Naive thymus-derived CD4-positive, alpha-beta T cell (primary cell): ENCODE measurements at regions of chr1 and their contacts with region 1.

Region 1: GRCh38 chr1:153727463-153728304 is at the start of gene INTS3:
- DNase-seq: peak; percentile 84 to 100 (median 99)
- ATAC-seq: peak; percentile 99
- H3K4me3 ChIP-seq: peak within 1 kb of the TSS; percentile 92
- H3K4me3 Mint-ChIP-seq: peak within 1 kb of the TSS; percentile 82 to 97 (median 92)
- H3K27ac ChIP-seq: peak within 1 kb of the TSS; percentile 94
- H3K27ac Mint-ChIP-seq: peak within 1 kb of the TSS; percentile 89 to 98 (median 95)
- H3K4me1 ChIP-seq: peaks cover 11 to 15% of the 10 kb centered on the region in 2 donors
- H3K4me1 Mint-ChIP-seq: peaks cover 7 to 35% (median 32%) of the 10 kb centered on the region in 7 donors
- H3K27me3 ChIP-seq: no peaks in the 10 kb centered on the region
- H3K27me3 Mint-ChIP-seq: peaks cover 0 to 2% (median 0%) of the 10 kb centered on the region in 5 donors
- total RNA-seq, gene INTS3: 43.6 to 68.1 (median 56.8) TPM

Region 2: DNA sequence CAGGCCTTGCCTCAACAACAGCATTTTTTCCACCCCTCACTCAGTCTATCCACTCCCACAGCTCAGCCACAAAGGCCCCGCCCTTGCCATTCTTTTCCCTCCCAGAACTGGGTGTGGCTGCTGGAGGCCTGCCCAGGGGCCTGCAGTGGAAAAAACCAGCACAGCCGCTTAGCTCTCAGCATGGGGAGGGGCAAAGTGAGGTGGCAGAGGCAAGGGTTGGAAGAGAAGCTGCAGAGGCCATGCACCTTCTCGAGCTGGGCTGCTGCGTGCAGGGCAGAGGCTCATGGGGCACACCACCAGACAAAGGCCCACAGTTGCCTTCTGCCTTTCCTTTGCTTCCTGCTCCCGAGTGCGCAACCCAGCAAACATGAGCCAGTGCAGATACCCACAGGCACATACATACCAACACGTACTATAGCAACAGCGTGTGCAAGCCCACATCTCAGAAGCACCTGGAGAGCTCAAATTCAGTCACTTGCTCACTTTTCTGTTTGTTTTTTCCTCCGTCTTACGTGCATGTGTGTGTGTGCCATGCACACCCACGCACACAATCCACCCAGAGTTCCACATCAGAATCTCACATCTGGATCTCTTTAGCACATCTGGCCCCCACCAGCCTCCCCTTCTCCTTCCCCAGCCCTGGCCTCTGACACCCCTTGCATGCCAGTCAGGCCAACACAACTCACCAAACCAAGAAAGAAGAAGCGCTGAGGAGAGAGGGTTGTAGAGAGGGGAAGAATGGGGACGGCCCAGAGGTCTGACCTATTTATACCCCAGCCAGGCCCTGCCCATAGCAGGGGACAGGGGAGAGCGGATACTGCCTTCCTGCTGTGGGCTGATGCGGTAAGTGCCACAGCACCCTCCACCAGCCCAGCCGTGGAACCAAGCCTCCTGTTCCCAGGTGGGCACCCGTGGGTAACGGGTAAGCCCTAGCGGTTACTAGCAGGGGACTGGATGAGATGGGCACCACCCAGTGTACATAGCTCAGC is 182.3 kb before region 1 on chr1 and contains the start of gene S100A4:
- CTCF ChIA-PET with region 1: no interaction called
- POLR2A ChIA-PET with region 1: interaction called, 4 read pairs
- intact Hi-C with region 1: loop called in 1 of 2 experiments (anchors 5 kb)
- DNase-seq: peak; percentile 50 to 93 (median 89)
- ATAC-seq: peak; percentile 84
- H3K4me3 ChIP-seq: peak within 1 kb of the TSS; percentile 69
- H3K4me3 Mint-ChIP-seq: peak within 1 kb of the TSS; percentile 85 to 97 (median 88)
- H3K27ac ChIP-seq: peak within 1 kb of the TSS; percentile 79
- H3K27ac Mint-ChIP-seq: peak within 1 kb of the TSS; percentile 93 to 99 (median 98)
- H3K4me1 ChIP-seq: peaks cover 53 to 69% of the 10 kb centered on the region in 2 donors
- H3K4me1 Mint-ChIP-seq: peaks cover 62 to 87% (median 74%) of the 10 kb centered on the region in 7 donors
- H3K27me3 ChIP-seq: no peaks in the 10 kb centered on the region
- H3K27me3 Mint-ChIP-seq: no peaks in the 10 kb centered on the region
- total RNA-seq, gene S100A4: 54.0 to 766 (median 204) TPM

Region 3: GRCh38 chr1:153633716-153634665 is 93.7 kb before region 1 on chr1 and contains the start of gene CHTOP:
- CTCF ChIA-PET with region 1: no interaction called
- POLR2A ChIA-PET with region 1: interaction called, 9 read pairs
- intact Hi-C with region 1: loop called (anchors 1 to 2 kb)
- DNase-seq: peak; percentile 96 to 99 (median 96)
- ATAC-seq: peak; percentile 95
- H3K4me3 ChIP-seq: peak within 1 kb of the TSS; percentile 99
- H3K4me3 Mint-ChIP-seq: peak within 1 kb of the TSS; percentile 97 to 100 (median 99)
- H3K27ac ChIP-seq: peak within 1 kb of the TSS; percentile 98
- H3K27ac Mint-ChIP-seq: peak within 1 kb of the TSS; percentile 98 to 100 (median 100)
- H3K4me1 ChIP-seq: peaks cover 11 to 25% of the 10 kb centered on the region in 2 donors
- H3K4me1 Mint-ChIP-seq: peaks cover 30 to 52% (median 41%) of the 10 kb centered on the region in 7 donors
- H3K27me3 ChIP-seq: no peaks in the 10 kb centered on the region
- H3K27me3 Mint-ChIP-seq: peaks cover 0 to 3% (median 0%) of the 10 kb centered on the region in 5 donors
- total RNA-seq, gene CHTOP: 85.2 to 143 (median 116) TPM

Region 4: GRCh38 chr1:153658400-153659174 is 69.1 kb before region 1 on chr1 and contains the start of gene SNAPIN:
- CTCF ChIA-PET with region 1: no interaction called
- POLR2A ChIA-PET with region 1: interaction called, 9 read pairs
- intact Hi-C with region 1: loop called (anchors 1 kb)
- DNase-seq: peak; percentile 81 to 94 (median 88)
- ATAC-seq: peak; percentile 98
- H3K4me3 ChIP-seq: peak within 1 kb of the TSS; percentile 93
- H3K4me3 Mint-ChIP-seq: peak within 1 kb of the TSS; percentile 91 to 97 (median 94)
- H3K27ac ChIP-seq: peak within 1 kb of the TSS; percentile 90
- H3K27ac Mint-ChIP-seq: peak within 1 kb of the TSS; percentile 90 to 98 (median 91)
- H3K4me1 ChIP-seq: peaks cover 9 to 13% of the 10 kb centered on the region in 2 donors
- H3K4me1 Mint-ChIP-seq: peaks cover 8 to 26% (median 14%) of the 10 kb centered on the region in 7 donors
- H3K27me3 ChIP-seq: no peaks in the 10 kb centered on the region
- H3K27me3 Mint-ChIP-seq: no peaks in the 10 kb centered on the region
- total RNA-seq, gene SNAPIN: 10.2 to 43.5 (median 29.8) TPM

Region 5: GRCh38 chr1:153749408-153750005 is 21.8 kb after region 1 on chr1:
- CTCF ChIA-PET with region 1: no interaction called
- POLR2A ChIA-PET with region 1: no interaction called
- intact Hi-C with region 1: loop called in 1 of 2 experiments (anchors 1 kb)
- DNase-seq: peak; percentile 62 to 79 (median 76)
- ATAC-seq: peak; percentile 100
- H3K4me3 ChIP-seq: no peak overlapping the region
- H3K4me3 Mint-ChIP-seq: no peak overlapping the region
- H3K27ac ChIP-seq: no peak overlapping the region
- H3K27ac Mint-ChIP-seq: peak overlapping the region in 4 of 9 donors; percentile 0 to 71 (median 8)
- H3K4me1 ChIP-seq: no peaks in the 10 kb centered on the region
- H3K4me1 Mint-ChIP-seq: peaks cover 0 to 9% (median 4%) of the 10 kb centered on the region in 7 donors
- H3K27me3 ChIP-seq: no peaks in the 10 kb centered on the region
- H3K27me3 Mint-ChIP-seq: no peaks in the 10 kb centered on the region

Region 6: DNA sequence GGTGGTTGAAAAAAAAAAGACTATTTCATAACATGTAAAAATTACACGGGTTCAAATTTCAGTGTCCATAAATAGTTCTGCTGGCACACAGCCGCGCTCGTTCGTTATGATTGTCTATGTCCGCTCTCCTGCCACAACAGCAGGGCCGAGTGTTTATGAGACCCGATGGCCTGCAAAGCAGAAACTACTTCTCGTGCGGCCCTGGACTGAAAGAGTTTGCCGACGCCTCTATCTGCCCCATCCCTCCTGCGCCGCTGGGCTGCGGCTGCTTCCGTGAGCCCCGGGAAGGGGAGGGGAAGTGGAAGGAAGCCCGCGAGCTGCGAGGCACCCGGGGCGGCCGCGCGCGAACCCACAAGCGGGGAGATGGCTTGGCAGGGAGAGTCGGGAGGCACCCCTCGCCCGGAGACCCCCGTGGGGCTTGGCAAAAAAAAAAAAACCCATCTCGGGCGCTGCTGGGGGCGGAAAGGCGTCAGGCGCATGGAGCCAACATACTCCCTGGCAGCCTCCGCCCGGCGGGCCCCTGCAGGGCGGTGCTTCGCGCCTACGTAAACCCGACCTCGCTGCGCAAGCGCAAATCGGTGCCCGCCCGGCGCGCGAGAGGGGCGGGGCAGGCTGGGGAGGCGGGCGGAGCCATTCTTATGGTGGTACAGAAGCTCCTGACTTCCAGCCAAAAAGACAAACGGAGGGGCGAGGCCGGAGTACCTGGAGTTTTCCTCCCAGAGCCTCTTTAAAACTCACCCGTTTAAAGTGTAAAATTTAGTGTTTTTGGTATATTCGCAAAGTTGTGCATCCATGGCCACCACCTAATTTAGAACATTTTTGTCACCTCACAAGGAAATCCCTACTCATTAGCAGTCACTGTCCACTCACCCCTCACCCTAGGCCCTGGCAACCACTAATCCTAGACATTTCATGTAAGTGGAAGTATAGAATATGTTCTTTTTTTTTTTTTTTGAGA is 55.8 kb after region 1 on chr1:
- CTCF ChIA-PET with region 1: no interaction called
- POLR2A ChIA-PET with region 1: interaction called, 3 read pairs
- intact Hi-C with region 1: loop called (anchors 2 to 5 kb)
- DNase-seq: peak; percentile 86 to 95 (median 92)
- ATAC-seq: peak; percentile 99
- H3K4me3 ChIP-seq: peak overlapping the region; percentile 78
- H3K4me3 Mint-ChIP-seq: peak overlapping the region; percentile 80 to 97 (median 90)
- H3K27ac ChIP-seq: peak overlapping the region; percentile 96
- H3K27ac Mint-ChIP-seq: peak overlapping the region; percentile 92 to 99 (median 95)
- H3K4me1 ChIP-seq: peaks cover 0 to 10% of the 10 kb centered on the region in 2 donors
- H3K4me1 Mint-ChIP-seq: peaks cover 0 to 17% (median 9%) of the 10 kb centered on the region in 7 donors
- H3K27me3 ChIP-seq: no peaks in the 10 kb centered on the region
- H3K27me3 Mint-ChIP-seq: peaks cover 0 to 6% (median 4%) of the 10 kb centered on the region in 5 donors

Region 7: GRCh38 chr1:153958111-153958960 is 230.7 kb after region 1 on chr1 and contains the start of gene CRTC2:
- CTCF ChIA-PET with region 1: no interaction called
- POLR2A ChIA-PET with region 1: interaction called, 3 read pairs
- intact Hi-C with region 1: loop called in 1 of 2 experiments (anchors 5 kb)
- DNase-seq: peak; percentile 86 to 99 (median 96)
- ATAC-seq: peak; percentile 94
- H3K4me3 ChIP-seq: peak within 1 kb of the TSS; percentile 74
- H3K4me3 Mint-ChIP-seq: peak within 1 kb of the TSS; percentile 91 to 100 (median 97)
- H3K27ac ChIP-seq: peak within 1 kb of the TSS; percentile 92
- H3K27ac Mint-ChIP-seq: peak within 1 kb of the TSS; percentile 89 to 98 (median 94)
- H3K4me1 ChIP-seq: peaks cover 36% of the 10 kb centered on the region in 2 donors
- H3K4me1 Mint-ChIP-seq: peaks cover 34 to 71% (median 67%) of the 10 kb centered on the region in 7 donors
- H3K27me3 ChIP-seq: no peaks in the 10 kb centered on the region
- H3K27me3 Mint-ChIP-seq: no peaks in the 10 kb centered on the region
- total RNA-seq, gene CRTC2: 86.1 to 157 (median 119) TPM